ENCODE measurements at regions of chr18 and their contacts with region 1.

Region 1: GRCh38 chr18:26335571-26336487 is 109.6 kb downstream of the TAF4B start:
- DNase-seq: no peak
- H3K4me3 Mint-ChIP-seq: no peak overlapping the region
- H3K27ac Mint-ChIP-seq: no peak overlapping the region
- H3K4me1 Mint-ChIP-seq: peaks cover 4% of the 10 kb centered on the region
- H3K27me3 Mint-ChIP-seq: no peaks in the 10 kb centered on the region

Region 2: DNA sequence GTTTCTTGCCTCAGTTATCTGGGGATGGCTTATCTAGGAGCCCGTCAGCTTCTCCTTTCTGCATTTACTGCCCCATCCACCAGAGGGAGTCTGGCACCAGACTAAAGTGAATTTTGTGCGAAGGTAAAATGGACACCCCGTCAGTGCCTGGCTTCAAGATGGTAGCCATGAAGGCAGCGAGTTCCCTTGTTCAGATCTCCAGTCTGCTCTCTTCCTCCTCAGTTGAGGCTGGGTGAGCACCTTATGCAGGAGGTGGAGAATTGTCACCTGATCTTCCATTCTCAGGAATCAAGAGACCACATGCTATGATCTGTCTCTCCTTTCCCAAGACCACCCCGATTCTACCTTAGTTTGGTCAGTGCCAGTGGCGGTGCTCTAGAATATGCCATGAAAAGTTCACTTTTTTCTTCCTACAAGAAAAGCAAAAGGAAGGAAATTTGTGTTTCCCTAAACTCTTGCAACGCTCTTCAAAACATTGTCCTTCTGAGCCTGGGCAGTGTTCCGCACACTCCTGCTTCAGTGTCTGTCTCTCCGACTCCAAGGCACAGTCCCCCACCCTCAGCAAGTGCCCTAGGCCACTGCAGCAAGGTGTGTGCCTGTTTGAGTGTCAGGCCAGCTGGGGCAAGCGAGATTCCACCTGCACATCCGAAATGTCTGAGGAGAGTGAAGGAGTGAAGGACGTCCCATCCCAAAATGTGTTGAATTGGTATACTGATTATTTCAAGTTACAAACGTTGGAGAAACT is 414.0 kb before region 1 on chr18:
- CTCF ChIA-PET with region 1: no interaction called
- intact Hi-C with region 1: loop called (anchors 10 kb)
- DNase-seq: peak; percentile 65
- H3K4me3 Mint-ChIP-seq: no peak overlapping the region
- H3K27ac Mint-ChIP-seq: no peak overlapping the region
- H3K4me1 Mint-ChIP-seq: no peaks in the 10 kb centered on the region
- H3K27me3 Mint-ChIP-seq: peaks cover 3% of the 10 kb centered on the region

Region 3: GRCh38 chr18:26103579-26103978 is 232.2 kb before region 1 on chr18:
- CTCF ChIA-PET with region 1: interaction called, 9 read pairs
- intact Hi-C with region 1: loop called (anchors 5 kb)
- DNase-seq: peak; percentile 79
- H3K4me3 Mint-ChIP-seq: no peak overlapping the region
- H3K27ac Mint-ChIP-seq: no peak overlapping the region
- H3K4me1 Mint-ChIP-seq: no peaks in the 10 kb centered on the region
- H3K27me3 Mint-ChIP-seq: no peaks in the 10 kb centered on the region